ENCODE measurements at regions of chr3 and their contacts with region 1.

Region 1: GRCh38 chr3:128845778-128846485 is 33.5 kb upstream of the ACAD9 start:
- DNase-seq: peak; percentile 77 to 83
- H3K4me3 ChIP-seq: peak overlapping the region; percentile 9 to 42 (median 27)
- H3K27ac ChIP-seq: peak overlapping the region in 1 of 3 donors; percentile 65
- H3K4me1 ChIP-seq: peaks cover 8% of the 10 kb centered on the region in 2 donors
- H3K27me3 ChIP-seq: no peaks in the 10 kb centered on the region
- CTCF ChIP-seq: peak; percentile 14 to 75 (median 57)
- POLR2A ChIP-seq: no peak

Region 2: DNA sequence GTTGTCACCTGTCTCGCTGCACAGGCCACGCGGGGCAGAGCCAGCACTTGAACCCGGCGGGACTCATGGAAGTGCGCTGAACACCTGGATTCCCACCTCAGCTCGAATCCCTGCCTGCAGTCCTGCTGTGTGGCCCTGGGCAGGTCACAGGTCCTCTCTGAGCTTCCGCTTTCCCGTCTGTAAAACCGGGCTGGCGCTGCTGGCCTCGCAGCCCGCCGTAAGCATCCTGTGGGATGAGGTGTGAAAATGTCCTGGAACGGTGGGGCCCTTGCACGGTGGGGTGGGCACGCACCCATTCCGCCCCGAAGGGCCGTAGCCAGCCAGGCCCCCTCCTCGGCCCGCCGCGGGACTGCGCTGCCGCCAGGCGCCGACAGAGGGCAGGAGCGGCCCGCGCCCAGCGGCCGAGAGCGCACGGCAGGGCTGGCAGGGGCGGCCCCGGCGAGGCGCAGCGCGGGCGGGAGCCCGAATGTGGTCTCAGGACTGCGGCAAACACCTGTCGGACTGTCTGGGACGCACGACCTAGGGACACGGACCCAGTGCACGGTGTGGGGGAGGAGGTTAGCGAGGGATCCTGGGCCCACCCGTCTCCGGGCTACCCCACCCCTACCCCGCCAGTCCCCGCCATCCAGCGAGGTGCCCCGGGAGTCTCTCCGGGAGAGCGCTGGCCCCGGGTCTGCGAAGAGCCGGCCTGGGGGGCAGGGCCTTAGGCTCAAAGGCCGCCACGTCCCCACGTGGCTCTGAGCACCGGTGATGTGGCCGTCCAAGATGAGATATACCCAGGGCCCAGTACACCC is 419.6 kb before region 1 on chr3:
- intact Hi-C with region 1: loop called (anchors 10 kb)
- DNase-seq: peak; percentile 45 to 48
- H3K4me3 ChIP-seq: no peak overlapping the region
- H3K27ac ChIP-seq: no peak overlapping the region
- H3K4me1 ChIP-seq: peaks cover 3 to 7% of the 10 kb centered on the region in 2 donors
- H3K27me3 ChIP-seq: no peaks in the 10 kb centered on the region
- CTCF ChIP-seq: peak; percentile 27 to 99 (median 86)
- POLR2A ChIP-seq: no peak

Region 3: DNA sequence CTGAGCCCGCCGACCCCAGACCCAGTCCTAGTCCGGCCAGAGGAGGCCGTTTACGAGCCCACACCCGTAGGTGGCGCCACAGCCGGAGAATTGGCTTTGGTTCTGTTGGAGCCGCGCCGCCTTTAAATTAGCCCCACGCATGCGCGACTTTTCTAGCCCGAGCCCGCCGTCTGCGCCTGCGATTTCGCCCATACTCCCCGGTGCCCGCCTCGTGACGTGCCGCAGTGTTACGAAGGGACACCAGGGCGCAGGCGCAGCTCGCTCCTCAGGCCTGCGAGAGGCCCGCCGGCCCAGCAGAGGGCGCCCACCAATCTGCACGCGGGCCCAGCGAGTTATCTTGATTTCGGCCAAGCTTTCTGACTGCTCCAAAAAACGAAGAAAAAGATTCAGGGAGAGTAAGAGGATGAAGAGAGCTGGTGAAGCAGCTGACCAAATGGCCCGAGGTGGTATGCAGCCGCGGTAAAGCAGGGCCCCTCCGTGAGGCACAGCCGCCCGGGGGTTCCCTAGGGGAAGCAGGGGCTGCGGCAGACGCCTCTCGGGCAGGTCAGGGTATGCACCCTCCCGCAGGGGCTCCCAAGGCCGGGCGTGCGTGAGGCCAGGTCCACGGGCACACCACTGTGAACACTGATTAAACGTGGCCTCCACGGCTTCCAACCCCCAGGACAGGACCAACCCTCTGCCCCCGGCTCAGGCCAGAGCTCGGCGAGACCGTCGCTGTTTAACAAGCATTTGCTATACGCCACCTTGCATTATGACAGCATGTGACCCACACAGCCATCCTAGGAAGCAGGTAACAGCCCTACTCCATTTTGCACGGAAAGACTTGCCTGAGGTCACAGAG is 228.2 kb before region 1 on chr3:
- intact Hi-C with region 1: loop called (anchors 2 kb)
- DNase-seq: peak; percentile 98
- H3K4me3 ChIP-seq: peak overlapping the region; percentile 12 to 61 (median 59)
- H3K27ac ChIP-seq: peak overlapping the region; percentile 33 to 87 (median 79)
- H3K4me1 ChIP-seq: peaks cover 10 to 35% of the 10 kb centered on the region in 2 donors
- H3K27me3 ChIP-seq: no peaks in the 10 kb centered on the region
- CTCF ChIP-seq: peak; percentile 69 to 98 (median 88)
- POLR2A ChIP-seq: peak in 1 of 2 donors; percentile 32

Region 4: DNA sequence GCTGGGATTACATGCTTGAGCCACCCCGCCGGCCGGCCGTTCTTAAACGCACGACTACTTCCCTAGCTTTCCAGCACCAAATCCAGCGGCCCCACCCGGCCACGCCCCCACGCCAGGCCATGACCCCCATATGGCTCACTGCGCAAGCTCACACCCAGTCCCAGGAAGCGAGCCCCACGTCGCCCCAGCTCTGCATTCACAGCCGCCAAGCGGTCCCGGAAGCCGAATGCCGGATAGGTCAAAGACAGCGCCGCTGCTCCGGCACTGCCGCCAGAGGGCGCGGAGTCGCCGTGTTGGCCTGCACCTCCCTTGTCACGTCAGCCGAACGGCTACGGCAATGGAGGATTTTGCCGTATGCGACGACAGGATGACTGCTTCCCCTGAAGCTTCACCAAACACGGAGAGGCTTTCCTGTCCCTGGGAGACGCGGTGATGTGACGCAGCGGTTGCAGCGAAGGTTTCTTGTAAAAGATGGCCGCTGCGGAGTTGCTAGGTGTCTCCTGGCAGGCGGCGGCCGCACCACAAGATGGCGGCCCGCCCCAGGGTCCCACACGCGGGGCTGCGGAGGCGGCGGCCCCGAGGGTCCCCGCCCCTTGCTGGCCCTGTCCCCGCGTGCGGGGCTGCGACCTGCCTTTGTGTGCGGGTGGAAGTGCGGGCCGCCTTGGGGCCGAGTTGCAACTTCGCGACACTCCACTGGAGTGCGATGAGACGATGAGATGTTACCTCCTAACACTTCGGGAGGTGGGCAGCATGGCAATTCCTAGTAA is 165.1 kb before region 1 on chr3:
- intact Hi-C with region 1: loop called (anchors 10 kb)
- DNase-seq: peak; percentile 99
- H3K4me3 ChIP-seq: peak overlapping the region; percentile 3 to 75 (median 42)
- H3K27ac ChIP-seq: peak overlapping the region; percentile 92 to 96 (median 94)
- H3K4me1 ChIP-seq: peaks cover 0 to 8% of the 10 kb centered on the region in 2 donors
- H3K27me3 ChIP-seq: no peaks in the 10 kb centered on the region
- CTCF ChIP-seq: peak; percentile 90 to 100 (median 98)
- POLR2A ChIP-seq: peak in 1 of 2 donors; percentile 82